MCF 10A (cell line): ENCODE measurements at regions of chr10 and their contacts with region 1.

Region 1: GRCh38 chr10:97701438-97702069 is 12.0 kb upstream of the MARVELD1 start:
- DNase-seq: peak; percentile 88
- H3K4me3 Mint-ChIP-seq: no peak overlapping the region
- H3K27ac Mint-ChIP-seq: no peak overlapping the region
- H3K4me1 Mint-ChIP-seq: peaks cover 8% of the 10 kb centered on the region
- H3K27me3 Mint-ChIP-seq: no peaks in the 10 kb centered on the region
- CTCF ChIP-seq: peak; percentile 80

Region 2: GRCh38 chr10:97553575-97554031 is 148.0 kb before region 1 on chr10:
- CTCF ChIA-PET with region 1: no interaction called
- POLR2A ChIA-PET with region 1: no interaction called
- intact Hi-C with region 1: no loop called
- DNase-seq: peak; percentile 78
- H3K4me3 Mint-ChIP-seq: no peak overlapping the region
- H3K27ac Mint-ChIP-seq: peak overlapping the region; percentile 46
- H3K4me1 Mint-ChIP-seq: peaks cover 28% of the 10 kb centered on the region
- H3K27me3 Mint-ChIP-seq: no peaks in the 10 kb centered on the region
- CTCF ChIP-seq: peak; percentile 88

Region 3: GRCh38 chr10:97731346-97732051 is 29.9 kb after region 1 on chr10:
- CTCF ChIA-PET with region 1: interaction called, 847 read pairs
- POLR2A ChIA-PET with region 1: interaction called, 14 read pairs
- intact Hi-C with region 1: loop called (anchors 1 kb)
- DNase-seq: peak; percentile 92
- H3K4me3 Mint-ChIP-seq: no peak overlapping the region
- H3K27ac Mint-ChIP-seq: no peak overlapping the region
- H3K4me1 Mint-ChIP-seq: peaks cover 15% of the 10 kb centered on the region
- H3K27me3 Mint-ChIP-seq: no peaks in the 10 kb centered on the region
- CTCF ChIP-seq: peak; percentile 86

Region 4: DNA sequence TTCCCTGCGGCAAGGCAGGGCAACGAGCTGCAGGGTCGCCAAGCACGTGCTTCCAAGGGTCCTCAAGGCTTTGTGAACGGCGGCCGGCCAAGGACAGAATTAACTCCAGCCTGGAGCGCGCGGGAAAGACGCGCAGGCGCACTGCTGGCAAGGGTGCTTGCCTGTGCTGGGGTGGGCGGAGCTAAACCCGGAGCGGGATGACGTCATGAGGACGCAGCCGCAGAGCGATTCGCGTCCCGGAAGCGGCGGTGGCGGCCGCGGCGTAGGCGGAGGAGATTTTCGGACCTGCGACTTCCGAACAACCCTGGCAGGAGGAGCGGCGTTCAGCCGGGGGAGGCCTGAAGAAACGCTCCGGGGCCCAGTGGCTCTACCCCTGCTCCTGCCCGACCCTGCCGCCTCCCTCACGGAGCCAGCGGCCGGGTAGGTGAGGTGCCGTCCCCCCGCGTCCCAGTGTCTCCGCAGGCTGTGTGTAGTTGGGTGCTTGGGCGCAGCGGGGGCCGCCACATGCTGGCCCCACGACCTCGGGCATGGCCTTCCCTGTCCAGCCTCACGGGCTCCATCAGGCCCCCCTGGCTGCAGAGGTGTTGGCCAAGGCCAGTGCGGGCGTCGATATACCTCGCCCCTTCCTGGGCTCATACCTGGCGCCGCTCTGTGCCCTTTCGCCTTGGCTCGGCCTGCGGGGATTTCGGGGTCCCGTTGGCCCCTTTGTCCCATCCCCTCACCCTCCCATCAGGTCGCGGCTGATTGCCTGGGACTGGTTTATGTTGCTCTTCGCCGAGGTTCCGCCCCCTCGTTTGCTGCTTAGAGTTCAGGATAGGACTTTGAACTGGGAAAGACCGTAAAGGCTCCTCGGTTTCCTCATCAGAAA is 35.6 kb after region 1 on chr10 and contains the start of gene ZFYVE27:
- CTCF ChIA-PET with region 1: interaction called, 847 read pairs
- POLR2A ChIA-PET with region 1: interaction called, 14 read pairs
- intact Hi-C with region 1: no loop called
- DNase-seq: peak; percentile 93
- H3K4me3 Mint-ChIP-seq: peak within 1 kb of the TSS; percentile 82
- H3K27ac Mint-ChIP-seq: peak within 1 kb of the TSS; percentile 89
- H3K4me1 Mint-ChIP-seq: peaks cover 27% of the 10 kb centered on the region
- H3K27me3 Mint-ChIP-seq: no peaks in the 10 kb centered on the region
- CTCF ChIP-seq: no peak
- total RNA-seq, gene ZFYVE27: 25.7 and 28.7 TPM in 2 replicates

Region 5: GRCh38 chr10:97757471-97757870 is 55.9 kb after region 1 on chr10:
- CTCF ChIA-PET with region 1: no interaction called
- POLR2A ChIA-PET with region 1: no interaction called
- intact Hi-C with region 1: no loop called
- DNase-seq: no peak
- H3K4me3 Mint-ChIP-seq: no peak overlapping the region
- H3K27ac Mint-ChIP-seq: no peak overlapping the region
- H3K4me1 Mint-ChIP-seq: no peaks in the 10 kb centered on the region
- H3K27me3 Mint-ChIP-seq: no peaks in the 10 kb centered on the region
- CTCF ChIP-seq: no peak